ENCODE measurements at regions of chr7 and their contacts with region 1.

Region 1: GRCh38 chr7:116354546-116355408 is 144.4 kb downstream of the TES start:
- DNase-seq: peak; percentile 82
- ATAC-seq: peak; percentile 86

Region 2: GRCh38 chr7:116258734-116259133 is 96.0 kb before region 1 on chr7:
- intact Hi-C with region 1: loop called (anchors 10 kb)
- DNase-seq: no peak
- ATAC-seq: peak; percentile 71

Region 3: GRCh38 chr7:116443101-116443523 is 88.3 kb after region 1 on chr7:
- intact Hi-C with region 1: loop called (anchors 5 kb)
- DNase-seq: no peak
- ATAC-seq: no peak

Region 4: DNA sequence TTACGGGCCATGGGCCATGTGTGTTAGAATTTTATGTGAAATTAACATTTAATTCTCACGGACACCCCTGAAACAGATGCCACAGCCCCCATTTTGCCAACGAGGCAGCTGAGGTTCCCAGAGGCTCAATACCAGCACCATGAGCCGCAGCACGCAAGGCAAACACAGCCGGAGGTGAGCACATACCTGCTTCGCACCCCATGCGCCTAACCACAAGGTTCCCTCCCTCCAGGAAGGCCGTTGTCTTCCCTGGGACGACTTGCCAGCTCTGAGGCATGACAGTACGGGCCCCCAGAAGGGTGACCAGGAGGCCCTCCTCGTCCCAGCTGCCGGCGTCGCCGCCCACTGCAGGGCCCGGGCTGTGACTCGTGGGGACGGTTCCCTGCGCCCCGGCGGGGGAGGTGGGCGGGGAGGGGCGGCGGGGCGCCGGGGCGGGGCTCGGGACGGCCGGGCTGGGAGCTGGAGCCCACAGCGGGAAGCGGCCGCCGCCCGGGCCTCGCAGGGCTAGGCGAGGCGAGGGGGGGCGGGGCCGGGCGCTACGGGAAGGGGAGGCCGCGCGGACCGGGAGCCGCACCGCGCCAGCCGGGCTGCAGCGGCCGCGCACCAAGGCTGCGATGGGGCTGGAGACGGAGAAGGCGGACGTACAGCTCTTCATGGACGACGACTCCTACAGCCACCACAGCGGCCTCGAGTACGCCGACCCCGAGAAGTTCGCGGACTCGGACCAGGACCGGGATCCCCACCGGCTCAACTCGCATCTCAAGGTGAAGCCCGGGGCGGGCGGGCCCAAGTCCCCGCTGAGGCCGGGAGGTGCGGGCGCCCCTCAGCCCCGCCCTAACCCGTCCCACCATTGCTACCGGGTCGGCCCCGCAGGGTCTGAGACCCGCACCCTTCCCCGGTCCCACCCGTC is 144.6 kb after region 1 on chr7 and contains the start of gene CAV2:
- intact Hi-C with region 1: loop called (anchors 2 kb)
- DNase-seq: peak; percentile 86
- ATAC-seq: peak; percentile 92
- total RNA-seq, gene CAV2: 183 TPM

Region 5: GRCh38 chr7:116525913-116526861 is 171.4 kb after region 1 on chr7:
- intact Hi-C with region 1: loop called (anchors 5 kb)
- DNase-seq: peak; percentile 88
- ATAC-seq: peak; percentile 86

Region 6: DNA sequence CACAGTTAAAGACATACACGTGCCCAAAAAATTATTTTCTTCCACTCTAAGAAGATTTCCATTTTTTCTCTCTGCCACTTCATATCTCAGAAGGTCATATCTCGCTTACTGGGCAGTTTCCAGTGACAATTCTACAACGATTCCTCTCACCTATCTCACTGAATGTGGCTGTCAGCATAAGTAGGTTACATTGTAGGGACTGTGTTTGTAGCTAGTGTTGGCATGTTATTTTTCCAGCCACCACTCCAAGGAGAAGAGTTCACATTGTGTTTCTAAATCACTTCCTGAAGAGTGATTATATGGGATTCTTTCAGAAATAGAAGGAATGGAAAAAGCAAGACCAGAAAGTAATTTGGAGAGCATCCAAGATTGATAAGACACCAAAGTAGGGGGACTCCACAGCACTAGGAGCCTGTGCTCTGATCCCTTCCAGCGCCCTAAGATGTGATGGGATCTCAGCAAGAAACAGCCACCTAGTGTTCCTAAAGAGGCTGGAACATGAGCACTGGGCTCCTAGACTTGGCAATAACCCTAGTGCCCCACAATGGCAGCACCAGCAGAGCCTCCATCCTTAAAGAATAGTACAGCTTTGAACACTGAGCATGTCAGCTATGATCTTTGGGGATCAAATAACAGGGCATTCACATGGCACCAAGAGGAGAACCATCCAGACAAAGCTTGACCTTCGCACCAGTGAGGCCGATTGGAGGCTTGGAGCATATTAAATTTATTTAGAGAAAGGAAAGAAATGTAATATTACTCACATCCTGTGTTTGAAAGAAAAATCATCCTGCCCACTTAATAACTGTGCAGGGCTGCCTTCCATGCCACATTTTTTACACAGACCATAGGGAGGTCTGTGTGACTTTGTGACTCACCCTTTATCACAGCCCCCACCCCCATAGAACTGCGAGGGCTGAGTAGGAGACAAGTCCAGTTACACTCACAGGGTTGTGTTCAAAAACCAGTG is 221.9 kb after region 1 on chr7:
- intact Hi-C with region 1: loop called (anchors 5 kb)
- DNase-seq: no peak
- ATAC-seq: peak; percentile 58

Measured in Right ventricle myocardium superior (tissue), 1 donor.